Mammary epithelial cell (primary cell): ENCODE measurements at regions of chr2 and their contacts with region 1.

Region 1: DNA sequence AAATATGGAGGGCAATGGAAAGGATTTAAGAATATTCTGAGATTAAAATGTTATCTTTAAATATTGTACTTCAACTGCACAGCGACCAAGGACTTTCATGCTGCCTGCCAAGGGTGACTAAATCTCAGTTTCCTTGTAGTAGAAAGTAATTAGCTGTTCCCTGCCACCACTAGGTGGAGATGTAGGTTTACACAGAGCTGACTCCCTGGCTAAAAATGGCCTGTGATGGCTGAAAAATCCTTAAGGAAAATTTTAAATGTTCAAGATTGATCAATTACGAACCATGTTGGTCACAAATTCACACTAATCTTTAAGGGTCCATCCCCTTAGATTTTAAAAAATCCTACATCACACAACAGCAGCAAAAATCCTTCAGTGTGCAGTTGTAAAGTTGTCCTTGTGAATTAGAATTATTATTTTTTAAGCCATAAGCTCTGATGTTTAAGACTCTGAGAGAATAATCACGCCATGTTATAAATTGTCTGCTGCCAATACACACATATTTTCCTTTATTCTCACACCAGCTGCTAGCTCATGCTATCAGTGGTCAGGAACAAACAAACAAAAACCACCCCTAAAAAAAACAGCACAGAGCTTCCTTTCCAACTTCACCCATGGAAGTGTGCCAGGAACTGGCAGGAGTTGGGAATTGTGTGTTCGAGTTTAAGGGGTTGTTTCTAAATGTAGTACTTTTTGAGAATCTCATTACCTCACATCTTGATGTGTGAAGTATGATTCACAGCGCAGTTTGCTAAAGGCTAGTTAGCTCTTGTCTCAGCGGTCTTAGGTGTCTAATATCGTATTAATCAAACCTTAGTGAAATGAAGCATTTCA is 399.8 kb downstream of the TMEM182 start:
- DNase-seq: peak; percentile 22
- H3K4me3 ChIP-seq: no peak overlapping the region
- H3K27ac ChIP-seq: no peak overlapping the region
- H3K4me1 ChIP-seq: no peaks in the 10 kb centered on the region
- H3K27me3 ChIP-seq: no peaks in the 10 kb centered on the region
- CTCF ChIP-seq: peak; percentile 76 to 81

Region 2: GRCh38 chr2:102841107-102841840 is 320.4 kb before region 1 on chr2:
- CTCF ChIA-PET with region 1: no interaction called
- dilution Hi-C with region 1: no loop called
- in situ Hi-C with region 1: no loop called
- intact Hi-C with region 1: loop called (anchors 2 kb)
- DNase-seq: peak; percentile 25
- H3K4me3 ChIP-seq: no peak overlapping the region
- H3K27ac ChIP-seq: no peak overlapping the region
- H3K4me1 ChIP-seq: no peaks in the 10 kb centered on the region
- H3K27me3 ChIP-seq: no peaks in the 10 kb centered on the region
- CTCF ChIP-seq: peak; percentile 49 to 65

Region 3: DNA sequence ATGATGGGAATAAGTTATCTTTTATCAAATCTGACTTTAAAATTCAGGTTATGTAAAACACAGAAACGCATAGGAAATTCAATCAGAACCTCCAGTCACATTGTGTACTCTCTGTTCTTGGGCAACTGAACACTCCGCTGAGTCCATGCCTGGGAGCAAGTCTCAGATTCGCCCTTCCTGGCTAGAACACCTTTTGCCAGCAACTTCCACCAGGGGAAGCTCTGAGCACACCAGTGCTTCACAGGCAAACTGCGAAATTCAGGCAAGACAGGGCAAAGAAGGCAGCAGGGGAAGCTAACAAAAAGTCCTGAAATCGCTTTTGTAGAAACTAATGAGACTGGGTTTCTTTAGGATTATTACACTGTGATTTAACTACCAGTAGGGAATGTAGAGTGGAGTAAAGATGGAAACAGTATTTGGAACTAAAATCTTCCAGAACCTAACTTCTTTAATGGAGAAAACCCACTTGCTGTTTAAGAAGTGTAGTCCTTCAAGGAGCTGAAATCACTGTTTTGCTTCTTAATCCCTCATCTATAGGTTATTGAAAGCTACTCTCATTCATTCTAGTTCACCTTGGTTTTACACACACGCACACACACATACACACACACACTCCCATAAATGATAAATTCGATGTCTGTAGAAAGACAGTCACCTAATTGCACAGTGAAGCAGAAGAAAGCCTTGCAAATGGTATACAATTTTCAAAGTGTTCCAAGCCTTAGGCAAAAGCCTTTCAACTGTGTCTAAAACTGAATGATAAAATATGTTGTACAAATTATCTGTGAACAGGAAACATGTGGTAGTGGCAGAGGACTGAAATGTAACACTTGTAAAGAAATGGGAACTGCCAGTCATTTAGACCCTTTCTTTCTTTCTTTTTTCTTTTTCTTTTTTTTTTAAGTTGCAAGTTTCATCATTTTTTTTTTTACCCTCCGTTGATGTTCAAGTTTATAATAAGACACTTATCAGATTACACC is 185.4 kb before region 1 on chr2:
- CTCF ChIA-PET with region 1: no interaction called
- dilution Hi-C with region 1: no loop called
- in situ Hi-C with region 1: no loop called
- intact Hi-C with region 1: loop called (anchors 5 kb)
- DNase-seq: peak; percentile 34
- H3K4me3 ChIP-seq: no peak overlapping the region
- H3K27ac ChIP-seq: no peak overlapping the region
- H3K4me1 ChIP-seq: no peaks in the 10 kb centered on the region
- H3K27me3 ChIP-seq: no peaks in the 10 kb centered on the region
- CTCF ChIP-seq: peak; percentile 46 to 91

Region 4: DNA sequence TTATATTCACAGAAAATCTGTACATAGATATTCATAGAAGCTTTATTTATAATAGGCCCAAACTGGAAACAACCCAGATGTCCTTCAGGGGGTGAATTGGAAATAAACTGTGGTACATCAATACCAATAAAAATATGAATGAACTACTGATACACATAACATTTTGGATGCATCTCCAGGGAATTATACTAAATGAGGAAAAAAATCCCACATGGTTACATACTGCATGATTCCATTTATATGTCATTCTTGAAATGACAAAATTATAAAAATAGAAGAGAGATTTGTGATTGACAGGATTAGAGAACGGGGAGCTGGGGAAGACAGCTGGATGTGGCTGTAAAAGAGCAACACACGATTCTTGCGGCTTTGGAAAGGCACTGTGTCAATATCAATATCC is 35.1 kb after region 1 on chr2:
- CTCF ChIA-PET with region 1: no interaction called
- dilution Hi-C with region 1: no loop called
- in situ Hi-C with region 1: no loop called
- intact Hi-C with region 1: no loop called
- DNase-seq: no peak
- H3K4me3 ChIP-seq: no peak overlapping the region
- H3K27ac ChIP-seq: no peak overlapping the region
- H3K4me1 ChIP-seq: no peaks in the 10 kb centered on the region
- H3K27me3 ChIP-seq: no peaks in the 10 kb centered on the region
- CTCF ChIP-seq: no peak

Region 5: GRCh38 chr2:104849618-104850141 is 1688.0 kb after region 1 on chr2:
- CTCF ChIA-PET with region 1: no interaction called
- dilution Hi-C with region 1: no loop called
- in situ Hi-C with region 1: loop called in 1 of 2 experiments (anchors 25 kb)
- intact Hi-C with region 1: loop called (anchors 2 kb)
- DNase-seq: peak; percentile 21
- H3K4me3 ChIP-seq: no peak overlapping the region
- H3K27ac ChIP-seq: no peak overlapping the region
- H3K4me1 ChIP-seq: no peaks in the 10 kb centered on the region
- H3K27me3 ChIP-seq: peaks cover 57% of the 10 kb centered on the region
- CTCF ChIP-seq: peak; percentile 68 to 74

Region 6: GRCh38 chr2:104872866-104873688 is 1711.4 kb after region 1 on chr2:
- CTCF ChIA-PET with region 1: no interaction called
- dilution Hi-C with region 1: no loop called
- in situ Hi-C with region 1: loop called in 1 of 2 experiments (anchors 25 kb)
- intact Hi-C with region 1: loop called (anchors 1 kb)
- DNase-seq: peak; percentile 46
- H3K4me3 ChIP-seq: peak overlapping the region; percentile 11 to 48 (median 47)
- H3K27ac ChIP-seq: no peak overlapping the region
- H3K4me1 ChIP-seq: peaks cover 12% of the 10 kb centered on the region
- H3K27me3 ChIP-seq: peaks cover 30% of the 10 kb centered on the region
- CTCF ChIP-seq: peak; percentile 38 to 68

Region 7: DNA sequence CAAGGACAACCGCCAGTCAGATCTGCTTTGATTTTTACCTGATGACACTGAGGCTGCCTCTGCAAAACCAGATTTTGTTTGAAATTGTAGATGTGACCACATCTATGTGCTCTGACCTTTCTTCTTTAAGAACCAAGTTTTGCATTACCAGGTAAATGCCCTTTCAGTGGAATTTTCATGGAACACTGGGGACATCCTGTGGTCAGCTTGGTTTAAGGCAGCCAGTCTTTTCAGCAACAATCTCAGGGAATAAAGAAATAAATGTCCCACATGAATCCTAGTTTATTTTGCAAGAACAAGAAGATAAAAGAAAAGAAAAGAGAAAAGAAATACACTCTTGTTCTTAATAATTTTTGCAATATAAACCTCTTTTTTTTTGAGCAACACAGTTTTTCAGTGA is 1782.8 kb after region 1 on chr2:
- CTCF ChIA-PET with region 1: no interaction called
- dilution Hi-C with region 1: no loop called
- in situ Hi-C with region 1: no loop called
- intact Hi-C with region 1: loop called (anchors 1 kb)
- DNase-seq: no peak
- H3K4me3 ChIP-seq: no peak overlapping the region
- H3K27ac ChIP-seq: no peak overlapping the region
- H3K4me1 ChIP-seq: no peaks in the 10 kb centered on the region
- H3K27me3 ChIP-seq: peaks cover 2% of the 10 kb centered on the region
- CTCF ChIP-seq: peak; percentile 37 to 44